AG04449 (cell line): ENCODE measurements at regions of chr1 and their contacts with region 1.

Region 1: DNA sequence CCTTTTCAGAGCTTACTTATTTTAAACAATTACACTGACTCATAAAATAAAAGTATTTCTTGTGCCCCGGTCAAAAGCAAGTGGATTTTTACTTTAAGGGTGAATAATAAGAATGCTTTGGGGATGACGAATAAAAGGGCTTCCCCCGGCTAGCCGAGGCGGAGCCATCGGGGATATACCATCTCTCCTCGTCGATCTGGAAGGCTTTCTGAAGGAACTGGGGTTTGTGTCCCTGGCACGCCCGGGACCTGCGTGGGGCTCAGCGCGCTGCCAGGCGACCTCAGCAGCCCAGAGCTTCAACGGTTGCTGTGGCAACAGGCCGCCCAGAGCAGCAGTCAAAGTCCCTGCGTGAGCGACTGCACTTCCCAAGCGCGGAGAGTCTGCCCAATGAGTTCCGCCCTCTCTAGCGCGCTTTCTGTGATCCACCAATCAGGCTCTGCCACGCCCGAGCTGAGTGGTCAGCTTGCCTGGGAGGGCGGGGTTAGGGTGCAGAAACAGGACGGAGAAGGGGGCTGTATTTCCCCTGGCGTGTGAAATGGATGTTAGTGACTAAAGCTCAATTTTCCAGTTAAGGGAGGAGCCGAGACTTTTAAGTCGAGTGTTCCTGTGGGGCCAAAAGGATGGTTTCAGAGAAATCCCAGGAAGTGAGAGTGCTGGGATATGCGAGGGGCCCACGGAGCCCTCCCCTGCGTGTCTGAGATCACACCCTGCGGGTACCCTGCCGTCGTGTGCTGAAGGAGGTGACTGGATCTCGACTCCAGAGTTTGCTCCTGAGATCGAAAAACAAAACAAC is 33.0 kb upstream of the MGST3 start:
- DNase-seq: peak; percentile 74
- H3K4me3 ChIP-seq: peak overlapping the region; percentile 76
- CTCF ChIP-seq: no peak

Region 2: DNA sequence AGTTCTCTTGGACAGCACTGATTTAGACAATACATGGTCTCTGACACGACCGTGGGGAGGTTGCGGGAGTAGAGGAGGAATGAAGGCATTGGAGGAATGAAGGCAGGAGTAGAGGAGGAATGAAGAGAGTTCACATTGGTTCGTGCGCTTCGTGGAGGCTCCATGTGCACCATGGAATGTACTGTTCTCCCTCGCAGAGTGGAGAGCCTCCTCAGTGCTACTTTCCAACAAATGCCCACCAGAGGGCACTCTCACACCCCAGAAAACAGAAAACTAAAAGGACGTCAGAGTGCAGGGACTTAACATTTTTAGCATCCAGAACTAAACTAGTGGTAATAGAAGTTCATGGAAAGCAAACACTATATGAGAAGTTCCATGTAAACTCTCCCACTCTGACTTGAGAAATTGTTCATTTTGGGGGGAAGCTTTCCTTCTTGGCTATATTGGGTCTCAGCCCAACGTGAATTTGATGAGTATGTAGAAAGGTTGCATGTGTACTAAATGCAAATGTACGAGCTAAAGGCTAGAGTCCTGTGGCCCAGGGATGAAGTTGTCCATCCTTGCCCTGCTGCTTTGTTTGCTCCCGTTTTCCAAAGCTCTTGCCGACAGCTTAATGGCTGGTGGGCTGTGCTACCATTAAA is 453.2 kb before region 1 on chr1:
- CTCF ChIA-PET with region 1: interaction called, 11 read pairs
- POLR2A ChIA-PET with region 1: no interaction called
- DNase-seq: peak; percentile 12
- H3K4me3 ChIP-seq: no peak overlapping the region
- CTCF ChIP-seq: peak; percentile 69

Region 3: GRCh38 chr1:165392634-165393571 is 205.2 kb before region 1 on chr1:
- CTCF ChIA-PET with region 1: interaction called, 277 read pairs
- POLR2A ChIA-PET with region 1: no interaction called
- DNase-seq: peak; percentile 62
- H3K4me3 ChIP-seq: no peak overlapping the region
- CTCF ChIP-seq: peak; percentile 90

Region 4: DNA sequence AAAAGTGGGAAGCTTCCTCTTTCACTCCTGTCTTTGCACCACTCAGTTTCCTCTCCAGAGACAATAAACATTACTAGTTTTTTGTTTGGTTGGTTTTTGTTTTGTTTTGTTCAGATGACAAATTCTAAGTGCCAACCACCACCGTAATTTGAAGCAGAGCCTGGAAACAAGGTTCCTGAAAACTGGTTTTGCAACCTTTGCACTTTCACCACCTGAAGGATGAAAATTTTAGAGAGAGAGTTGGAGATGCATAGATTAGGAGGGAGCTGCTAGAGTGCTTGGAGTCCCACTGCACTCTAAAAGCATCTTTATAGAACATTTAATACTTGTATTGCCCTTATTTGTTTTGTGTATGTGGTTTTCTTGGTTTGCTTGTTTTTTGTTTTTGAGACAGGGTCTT is 12.8 kb after region 1 on chr1:
- CTCF ChIA-PET with region 1: interaction called, 25 read pairs
- POLR2A ChIA-PET with region 1: no interaction called
- DNase-seq: no peak
- H3K4me3 ChIP-seq: no peak overlapping the region
- CTCF ChIP-seq: no peak

Region 5: DNA sequence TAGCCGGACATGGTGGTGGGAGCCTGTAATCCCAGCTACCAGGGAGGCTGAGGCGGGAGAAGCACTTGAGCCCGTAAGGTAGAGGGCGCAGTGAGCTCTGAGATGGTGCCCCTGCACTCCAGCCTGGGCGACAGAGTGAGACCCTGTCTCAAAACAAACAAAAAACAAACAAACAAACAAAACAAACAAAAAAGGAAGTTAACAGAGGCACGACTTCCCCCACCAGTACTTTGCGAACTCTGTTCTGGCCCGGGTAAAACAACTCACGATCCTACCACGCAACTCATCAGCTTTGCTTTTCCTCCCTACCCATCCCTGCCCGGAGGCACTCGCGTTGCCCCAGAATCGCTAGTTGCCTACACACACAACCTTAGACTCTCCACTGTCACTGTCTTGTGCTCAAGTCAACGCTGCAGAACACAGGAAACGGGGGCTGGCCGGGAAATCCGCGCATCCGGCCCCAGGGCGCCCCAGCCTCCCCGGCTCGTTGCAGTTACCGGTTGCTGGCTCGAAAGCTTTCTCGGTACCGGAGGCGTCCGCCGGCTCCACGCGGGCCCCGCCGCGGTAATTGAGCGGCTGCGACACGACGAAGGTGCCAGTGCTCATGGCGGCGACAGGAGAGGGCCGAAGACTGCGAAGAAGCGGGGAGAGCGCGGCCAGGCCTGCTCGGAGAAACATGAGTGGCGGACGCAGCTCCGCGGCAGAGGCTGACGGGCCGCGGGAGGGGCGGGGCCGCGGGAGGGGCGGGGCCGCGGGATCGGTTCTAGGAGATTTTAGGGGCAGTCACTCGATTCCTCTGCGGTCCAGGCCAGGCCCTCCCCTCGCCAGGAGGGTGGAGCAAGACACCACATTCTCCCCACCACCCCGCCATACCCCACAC is 100.0 kb after region 1 on chr1 and contains the start of gene ALDH9A1:
- CTCF ChIA-PET with region 1: interaction called, 16 read pairs
- POLR2A ChIA-PET with region 1: interaction called, 7 read pairs
- DNase-seq: peak; percentile 26
- H3K4me3 ChIP-seq: peak within 1 kb of the TSS; percentile 81
- CTCF ChIP-seq: peak; percentile 33